Motor neuron (in vitro differentiated cells): ENCODE measurements at regions of chr6 and their contacts with region 1.

Region 1: DNA sequence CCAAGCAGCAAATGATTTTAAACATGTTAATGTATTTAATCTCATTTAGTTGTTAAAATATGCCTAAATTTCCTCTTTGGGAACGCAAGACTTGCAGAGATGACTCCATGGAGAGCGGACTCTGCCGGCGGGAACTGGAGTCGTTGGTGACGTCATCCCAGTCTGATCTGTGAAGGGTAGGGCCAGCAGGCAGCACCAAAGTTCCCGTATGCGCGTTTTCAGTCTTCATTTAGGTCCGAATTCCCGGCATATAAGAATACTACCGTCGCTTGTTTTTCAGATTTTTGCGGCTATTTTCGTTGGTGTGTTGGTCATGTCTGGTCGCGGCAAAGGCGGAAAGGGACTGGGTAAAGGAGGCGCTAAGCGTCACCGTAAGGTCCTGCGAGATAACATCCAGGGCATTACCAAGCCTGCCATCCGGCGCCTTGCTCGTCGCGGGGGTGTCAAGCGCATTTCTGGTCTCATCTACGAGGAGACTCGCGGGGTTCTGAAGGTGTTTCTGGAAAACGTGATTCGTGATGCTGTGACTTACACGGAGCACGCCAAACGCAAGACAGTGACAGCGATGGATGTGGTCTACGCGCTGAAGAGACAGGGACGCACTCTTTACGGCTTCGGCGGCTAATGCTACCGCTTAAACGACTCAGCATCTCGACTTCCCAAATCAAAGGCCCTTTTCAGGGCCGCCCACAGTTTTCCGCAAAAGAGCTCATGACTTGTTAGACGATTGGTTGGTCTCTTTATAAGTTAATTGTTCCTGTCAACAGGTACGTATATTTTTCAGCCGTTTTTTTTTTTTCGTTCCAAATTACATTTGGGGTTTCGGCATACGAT is 117.3 kb downstream of the HFE start:
- ATAC-seq: peak; percentile 75 to 87 (median 80)
- H3K4me3 ChIP-seq: peak overlapping the region; percentile 59 to 81 (median 71)
- H3K27ac ChIP-seq: peak overlapping the region; percentile 84 to 93
- H3K4me1 ChIP-seq: peaks cover 15 to 24% of the 10 kb centered on the region in 2 donors

Region 2: GRCh38 chr6:25749837-25750236 is 454.7 kb before region 1 on chr6:
- in situ Hi-C with region 1: no loop called
- ATAC-seq: no peak
- H3K4me3 ChIP-seq: no peak overlapping the region
- H3K27ac ChIP-seq: no peak overlapping the region
- H3K4me1 ChIP-seq: no peaks in the 10 kb centered on the region

Region 3: DNA sequence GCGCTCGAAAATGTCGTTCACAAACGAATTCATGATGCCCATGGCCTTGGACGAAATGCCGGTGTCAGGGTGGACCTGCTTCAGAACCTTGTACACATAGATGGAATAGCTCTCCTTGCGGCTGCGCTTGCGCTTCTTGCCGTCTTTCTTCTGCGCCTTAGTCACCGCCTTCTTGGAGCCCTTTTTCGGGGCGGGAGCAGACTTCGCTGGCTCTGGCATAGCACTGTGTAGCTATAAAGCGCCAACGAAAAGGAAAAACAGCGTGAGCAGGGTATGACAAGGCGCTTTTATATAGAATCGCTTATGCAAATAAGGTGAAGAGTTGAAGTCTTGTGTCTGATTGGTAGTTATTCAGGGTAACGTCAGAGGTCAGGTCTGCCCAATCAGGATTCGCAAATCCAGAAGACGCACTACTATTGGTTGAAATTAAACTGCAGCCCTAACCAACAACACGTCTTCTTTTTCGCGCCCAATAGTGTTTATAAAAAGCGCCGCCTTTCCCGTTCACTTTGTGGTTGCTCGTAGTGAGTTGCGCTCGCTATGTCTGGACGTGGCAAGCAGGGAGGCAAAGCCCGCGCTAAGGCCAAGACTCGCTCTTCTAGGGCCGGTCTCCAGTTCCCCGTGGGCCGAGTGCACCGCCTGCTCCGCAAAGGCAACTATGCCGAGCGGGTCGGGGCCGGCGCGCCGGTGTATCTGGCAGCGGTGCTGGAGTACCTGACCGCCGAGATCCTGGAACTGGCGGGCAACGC is 928.2 kb after region 1 on chr6:
- in situ Hi-C with region 1: loop called in 2 of 9 experiments (anchors 25 kb)
- ATAC-seq: peak; percentile 83 to 92 (median 88)
- H3K4me3 ChIP-seq: peak overlapping the region; percentile 56 to 77 (median 60)
- H3K27ac ChIP-seq: peak overlapping the region in 1 of 2 donors; percentile 54
- H3K4me1 ChIP-seq: peaks cover 0 to 2% of the 10 kb centered on the region in 2 donors